ENCODE measurements at regions of chrX and their contacts with region 1.

Region 1: GRCh38 chrX:71128915-71129765 is 10.7 kb downstream of the MED12 start:
- DNase-seq: peak; percentile 43 to 85 (median 70)
- ATAC-seq: peak; percentile 86 to 96 (median 90)
- H3K4me3 ChIP-seq: no peak overlapping the region
- H3K4me3 Mint-ChIP-seq: no peak overlapping the region
- H3K27ac ChIP-seq: peak overlapping the region; percentile 43
- H3K27ac Mint-ChIP-seq: peak overlapping the region; percentile 78 to 89
- H3K4me1 ChIP-seq: peaks cover 0 to 16% of the 10 kb centered on the region in 2 experiments
- H3K4me1 Mint-ChIP-seq: peaks cover 8 to 21% (median 20%) of the 10 kb centered on the region in 3 donors
- H3K27me3 ChIP-seq: no peaks in the 10 kb centered on the region
- H3K27me3 Mint-ChIP-seq: peaks cover 0 to 23% of the 10 kb centered on the region in 2 donors

Region 2: DNA sequence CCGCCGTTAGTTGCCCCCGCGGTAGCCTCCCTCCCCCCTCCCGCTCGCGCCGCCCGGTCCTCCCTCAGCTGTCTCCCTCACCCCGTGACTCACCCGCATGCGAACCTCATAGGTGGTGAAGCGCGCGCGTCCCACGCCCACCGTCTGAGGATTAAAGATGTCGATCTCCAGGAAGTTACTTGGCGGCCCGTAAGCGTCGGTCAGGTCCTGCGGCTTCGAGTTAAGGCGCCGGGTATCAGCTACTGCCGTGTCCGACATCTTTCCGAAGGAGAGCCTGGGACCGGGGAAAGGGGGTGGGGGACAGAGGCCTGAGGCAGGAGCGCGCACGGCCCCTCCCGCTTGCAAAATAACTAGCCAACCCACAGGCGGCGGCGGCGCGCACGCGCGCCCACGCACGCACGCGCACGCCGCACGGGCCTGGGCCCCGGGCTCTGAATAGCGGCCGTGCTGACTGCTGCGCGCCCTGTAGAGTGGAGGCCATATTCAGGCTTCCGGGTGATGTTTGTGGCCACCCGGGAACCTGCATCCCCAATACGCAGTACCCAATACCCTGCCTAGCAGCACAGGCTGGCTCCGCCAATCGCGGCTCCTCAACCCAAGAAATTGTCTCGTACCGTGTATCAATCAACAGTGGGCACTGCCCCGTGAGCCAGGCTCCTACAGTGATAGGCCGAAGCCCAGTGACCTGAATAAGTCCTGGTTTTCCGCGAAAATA is 60.9 kb before region 1 on chrX and contains the start of gene SNX12:
- CTCF ChIA-PET with region 1: interaction called in 1 of 2 experiments, 4 read pairs
- POLR2A ChIA-PET with region 1: interaction called in 1 of 2 experiments, 10 read pairs
- DNase-seq: peak; percentile 77 to 92 (median 85)
- ATAC-seq: peak; percentile 92 to 96 (median 93)
- H3K4me3 ChIP-seq: peak within 1 kb of the TSS; percentile 71 to 77
- H3K4me3 Mint-ChIP-seq: peak within 1 kb of the TSS; percentile 83 to 92 (median 85)
- H3K27ac ChIP-seq: peak within 1 kb of the TSS; percentile 87
- H3K27ac Mint-ChIP-seq: peak within 1 kb of the TSS; percentile 94 to 95
- H3K4me1 ChIP-seq: peaks cover 0 to 13% of the 10 kb centered on the region in 2 experiments
- H3K4me1 Mint-ChIP-seq: peaks cover 8 to 22% (median 22%) of the 10 kb centered on the region in 3 donors
- H3K27me3 ChIP-seq: no peaks in the 10 kb centered on the region
- H3K27me3 Mint-ChIP-seq: peaks cover 0 to 18% of the 10 kb centered on the region in 2 donors
- total RNA-seq, gene SNX12: 29.6 to 42.5 (median 33.1) TPM

Region 3: GRCh38 chrX:71098302-71098701 is 30.8 kb before region 1 on chrX:
- CTCF ChIA-PET with region 1: interaction called, 10 to 25 read pairs
- POLR2A ChIA-PET with region 1: interaction called, 4 read pairs
- DNase-seq: peak; percentile 63 to 87 (median 73)
- ATAC-seq: peak; percentile 21 to 42 (median 30)
- H3K4me3 ChIP-seq: no peak overlapping the region
- H3K4me3 Mint-ChIP-seq: peak overlapping the region; percentile 9 to 61 (median 47)
- H3K27ac ChIP-seq: peak overlapping the region; percentile 12
- H3K27ac Mint-ChIP-seq: peak overlapping the region; percentile 71 to 76
- H3K4me1 ChIP-seq: peaks cover 7 to 67% of the 10 kb centered on the region in 2 experiments
- H3K4me1 Mint-ChIP-seq: peaks cover 63 to 69% (median 66%) of the 10 kb centered on the region in 3 donors
- H3K27me3 ChIP-seq: no peaks in the 10 kb centered on the region
- H3K27me3 Mint-ChIP-seq: peaks cover 0 to 4% of the 10 kb centered on the region in 2 donors

Region 4: GRCh38 chrX:71103110-71103983 is 25.8 kb before region 1 on chrX:
- CTCF ChIA-PET with region 1: interaction called, 10 to 25 read pairs
- POLR2A ChIA-PET with region 1: interaction called in 1 of 2 experiments, 6 read pairs
- DNase-seq: peak in 34 of 35 experiments; percentile 29 to 72 (median 56)
- ATAC-seq: peak; percentile 38 to 65 (median 44)
- H3K4me3 ChIP-seq: peak overlapping the region; percentile 30 to 61
- H3K4me3 Mint-ChIP-seq: peak overlapping the region; percentile 53 to 80 (median 65)
- H3K27ac ChIP-seq: peak overlapping the region; percentile 82
- H3K27ac Mint-ChIP-seq: peak overlapping the region; percentile 90 to 97
- H3K4me1 ChIP-seq: peaks cover 27 to 95% of the 10 kb centered on the region in 2 experiments
- H3K4me1 Mint-ChIP-seq: peaks cover 85 to 92% (median 91%) of the 10 kb centered on the region in 3 donors
- H3K27me3 ChIP-seq: no peaks in the 10 kb centered on the region
- H3K27me3 Mint-ChIP-seq: no peaks in the 10 kb centered on the region

Region 5: DNA sequence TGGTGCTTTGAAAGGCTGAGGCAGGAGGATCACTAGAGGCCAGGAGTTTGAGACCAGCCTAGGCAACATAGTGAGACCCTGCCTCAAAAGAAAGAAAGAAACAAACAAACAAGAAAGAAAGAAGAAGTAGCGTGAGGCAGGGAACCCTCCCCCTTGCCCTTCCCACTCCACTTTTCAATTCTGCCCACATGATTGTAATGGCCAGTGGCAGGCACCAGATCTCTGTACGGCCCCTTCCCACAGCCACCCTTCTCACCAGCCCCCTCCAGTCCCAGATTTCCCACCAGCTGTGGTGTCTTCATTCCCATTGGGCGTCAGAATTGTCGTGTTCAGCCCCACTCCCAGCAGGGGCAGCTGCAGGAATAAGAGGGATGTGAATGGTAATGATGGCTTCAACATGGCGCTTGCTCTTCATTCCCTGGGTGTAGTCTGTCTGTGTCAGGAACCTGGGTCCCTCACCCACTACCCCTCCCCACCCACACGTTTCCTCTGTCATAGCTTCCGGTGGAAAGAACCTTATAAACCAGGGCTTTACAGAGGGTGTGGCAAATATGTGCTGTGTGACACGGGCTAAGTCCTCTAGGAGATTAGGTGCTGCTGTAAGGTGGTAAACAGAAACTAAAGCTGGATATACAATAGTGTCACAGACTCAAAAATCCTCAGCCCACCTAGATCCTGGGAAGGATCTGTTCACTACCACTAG is 17.8 kb before region 1 on chrX and contains the start of gene IL2RG:
- CTCF ChIA-PET with region 1: interaction called, 8 to 16 read pairs
- POLR2A ChIA-PET with region 1: interaction called, 4 to 7 read pairs
- DNase-seq: peak; percentile 35 to 90 (median 79)
- ATAC-seq: peak; percentile 87 to 91 (median 91)
- H3K4me3 ChIP-seq: peak within 1 kb of the TSS; percentile 94
- H3K4me3 Mint-ChIP-seq: peak within 1 kb of the TSS; percentile 95 to 99 (median 97)
- H3K27ac ChIP-seq: peak within 1 kb of the TSS; percentile 99
- H3K27ac Mint-ChIP-seq: peak within 1 kb of the TSS; percentile 97 to 99
- H3K4me1 ChIP-seq: peaks cover 17 to 56% of the 10 kb centered on the region in 2 experiments
- H3K4me1 Mint-ChIP-seq: peaks cover 54 to 68% (median 60%) of the 10 kb centered on the region in 3 donors
- H3K27me3 ChIP-seq: no peaks in the 10 kb centered on the region
- H3K27me3 Mint-ChIP-seq: no peaks in the 10 kb centered on the region
- total RNA-seq, gene IL2RG: 285 to 380 (median 312) TPM

Region 6: GRCh38 chrX:71282514-71283402 is 153.6 kb after region 1 on chrX:
- CTCF ChIA-PET with region 1: no interaction called
- POLR2A ChIA-PET with region 1: no interaction called
- DNase-seq: peak in 29 of 35 experiments; percentile 7 to 65 (median 30)
- ATAC-seq: peak; percentile 54 to 62 (median 58)
- H3K4me3 ChIP-seq: peak overlapping the region; percentile 25 to 79
- H3K4me3 Mint-ChIP-seq: peak overlapping the region; percentile 92 to 97 (median 97)
- H3K27ac ChIP-seq: peak overlapping the region; percentile 96
- H3K27ac Mint-ChIP-seq: peak overlapping the region; percentile 98 to 99
- H3K4me1 ChIP-seq: peaks cover 9 to 17% of the 10 kb centered on the region in 2 experiments
- H3K4me1 Mint-ChIP-seq: peaks cover 6 to 20% (median 16%) of the 10 kb centered on the region in 3 donors
- H3K27me3 ChIP-seq: no peaks in the 10 kb centered on the region
- H3K27me3 Mint-ChIP-seq: peaks cover 0 to 6% of the 10 kb centered on the region in 2 donors

Region 7: DNA sequence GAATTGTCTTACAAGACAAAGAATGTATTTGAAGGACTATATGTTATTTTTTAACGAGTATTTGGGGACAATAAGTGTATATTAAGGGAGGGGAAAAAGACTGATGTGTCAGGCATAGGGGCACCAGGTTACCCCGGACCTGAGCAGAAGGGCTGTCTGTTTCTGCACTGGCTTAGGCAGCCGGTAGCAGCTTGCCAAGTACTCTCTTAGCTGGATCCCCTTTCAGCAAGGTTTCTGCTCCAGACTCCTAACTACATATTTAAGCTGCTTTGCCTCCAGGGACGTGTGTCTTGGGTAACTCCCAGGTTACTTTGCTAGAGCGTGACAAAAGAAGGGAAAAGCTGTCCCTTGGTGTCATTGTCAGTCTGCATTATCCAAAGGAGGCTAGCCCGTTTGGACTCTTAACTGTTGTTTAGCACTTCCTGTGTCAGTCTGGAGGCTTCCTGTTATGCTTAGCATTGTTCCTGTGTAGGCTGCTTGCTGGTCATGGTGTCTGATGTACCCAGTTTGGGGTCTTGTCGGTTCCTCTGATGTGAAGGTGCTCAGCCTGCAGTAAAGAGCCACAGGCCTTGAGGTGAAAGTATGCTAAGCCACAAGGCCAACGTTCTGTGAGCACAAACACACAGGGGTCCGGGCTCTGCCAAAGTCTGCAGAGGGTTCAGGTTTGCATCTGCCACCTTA is 477.5 kb after region 1 on chrX:
- CTCF ChIA-PET with region 1: no interaction called
- POLR2A ChIA-PET with region 1: no interaction called
- DNase-seq: peak in 25 of 35 experiments; percentile 22 to 75 (median 39)
- ATAC-seq: peak; percentile 83 to 92 (median 89)
- H3K4me3 ChIP-seq: no peak overlapping the region
- H3K4me3 Mint-ChIP-seq: peak overlapping the region; percentile 21 to 60 (median 34)
- H3K27ac ChIP-seq: peak overlapping the region; percentile 69
- H3K27ac Mint-ChIP-seq: peak overlapping the region; percentile 95
- H3K4me1 ChIP-seq: peaks cover 8 to 50% of the 10 kb centered on the region in 2 experiments
- H3K4me1 Mint-ChIP-seq: peaks cover 55 to 62% (median 58%) of the 10 kb centered on the region in 3 donors
- H3K27me3 ChIP-seq: no peaks in the 10 kb centered on the region
- H3K27me3 Mint-ChIP-seq: peaks cover 0 to 15% of the 10 kb centered on the region in 2 donors

Measured in T-cell (primary cell).